Left lung (tissue), 14 donors: ENCODE measurements at regions of chr16 and their contacts with region 1.

Region 1: GRCh38 chr16:11407047-11407982 is 62.1 kb downstream of the RMI2 start:
- DNase-seq: peak in 3 of 4 donors; percentile 44 to 58 (median 54)
- ATAC-seq: peak; percentile 91
- H3K4me3 ChIP-seq: no peak overlapping the region
- H3K27ac ChIP-seq: no peak overlapping the region
- H3K4me1 ChIP-seq: peaks cover 0 to 5% of the 10 kb centered on the region in 2 donors
- H3K27me3 ChIP-seq: no peaks in the 10 kb centered on the region
- CTCF ChIP-seq: peak; percentile 61 to 62

Region 2: DNA sequence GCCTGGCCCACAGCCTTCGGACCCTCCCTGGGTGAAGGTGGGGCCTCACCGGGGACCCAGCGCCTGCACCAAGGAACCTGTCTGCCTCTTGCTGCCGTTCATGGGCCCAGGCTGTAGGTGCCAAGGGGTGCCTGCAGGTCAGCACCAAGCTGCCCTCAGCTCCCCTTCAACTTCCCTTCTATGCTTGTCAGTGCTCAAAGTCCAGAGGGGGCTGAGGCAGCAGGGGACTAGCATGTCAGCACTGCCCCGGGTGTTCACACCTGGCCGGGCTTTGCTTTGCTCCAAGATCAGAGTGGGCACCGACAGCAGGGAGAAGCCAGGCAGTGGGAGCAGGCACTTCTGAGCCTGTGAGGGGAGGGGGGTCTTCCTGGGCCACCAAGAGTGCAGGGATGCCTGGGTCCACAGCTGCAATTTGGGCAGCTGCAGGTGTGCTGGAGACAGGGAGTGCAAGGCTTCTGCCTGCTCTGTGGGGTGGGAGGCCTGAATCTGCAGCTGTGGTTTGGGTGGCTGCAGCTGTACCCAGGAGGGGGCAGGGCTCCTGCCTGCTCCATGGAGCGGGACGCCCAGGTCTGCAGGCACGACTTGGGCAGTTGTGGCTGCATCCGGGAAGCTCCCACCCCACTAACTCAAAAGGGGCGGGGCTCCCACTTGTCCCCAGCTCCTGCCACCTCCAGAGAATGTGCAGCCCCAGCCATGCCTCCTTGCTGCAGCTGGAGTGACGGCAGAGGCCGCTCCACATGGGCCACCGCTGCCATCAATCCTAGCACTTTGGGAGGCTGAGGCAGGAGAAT is 98.6 kb before region 1 on chr16:
- intact Hi-C with region 1: no loop called
- DNase-seq: no peak
- ATAC-seq: no peak
- H3K4me3 ChIP-seq: no peak overlapping the region
- H3K27ac ChIP-seq: peak overlapping the region; percentile 65 to 75
- H3K4me1 ChIP-seq: peaks cover 4 to 68% of the 10 kb centered on the region in 2 donors
- H3K27me3 ChIP-seq: no peaks in the 10 kb centered on the region
- CTCF ChIP-seq: no peak

Region 3: DNA sequence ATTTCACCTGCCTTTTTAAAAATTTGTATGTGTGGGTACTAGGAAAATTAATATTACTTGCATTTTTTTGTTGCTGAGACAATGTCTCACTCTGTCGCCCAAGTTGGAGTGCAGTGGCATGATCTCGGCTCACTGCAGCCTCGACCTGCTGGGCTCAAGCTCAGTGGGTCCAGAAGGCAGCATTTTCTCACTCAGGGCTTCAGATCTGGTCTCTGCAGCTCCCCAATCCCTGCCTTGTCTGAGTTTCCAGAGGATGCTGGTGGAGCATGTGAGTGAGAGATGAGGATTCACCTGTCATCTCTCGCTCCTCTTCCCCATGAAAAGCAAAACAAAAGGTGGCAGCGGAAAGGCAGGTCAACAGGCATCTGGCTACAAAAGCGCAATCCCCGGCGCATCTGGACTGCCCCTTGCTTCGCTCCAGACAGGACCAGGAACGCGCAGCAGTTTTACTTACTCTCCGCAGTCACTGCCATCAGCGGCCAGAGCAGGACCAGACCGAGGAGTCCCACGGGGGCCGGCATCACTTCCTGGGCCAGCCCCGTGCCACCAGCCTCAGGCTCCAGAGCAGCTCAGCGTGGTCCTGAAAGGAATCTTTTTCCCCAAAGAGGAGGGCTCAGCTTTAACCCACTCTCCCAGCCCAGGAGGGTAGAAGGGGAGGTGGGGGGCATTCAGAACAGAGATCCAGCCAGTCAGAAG is 119.5 kb after region 1 on chr16:
- intact Hi-C with region 1: loop called in 1 of 2 experiments (anchors 10 kb)
- DNase-seq: no peak
- ATAC-seq: no peak
- H3K4me3 ChIP-seq: no peak overlapping the region
- H3K27ac ChIP-seq: no peak overlapping the region
- H3K4me1 ChIP-seq: no peaks in the 10 kb centered on the region
- H3K27me3 ChIP-seq: peaks cover 0 to 17% of the 10 kb centered on the region in 2 donors
- CTCF ChIP-seq: no peak

Region 4: DNA sequence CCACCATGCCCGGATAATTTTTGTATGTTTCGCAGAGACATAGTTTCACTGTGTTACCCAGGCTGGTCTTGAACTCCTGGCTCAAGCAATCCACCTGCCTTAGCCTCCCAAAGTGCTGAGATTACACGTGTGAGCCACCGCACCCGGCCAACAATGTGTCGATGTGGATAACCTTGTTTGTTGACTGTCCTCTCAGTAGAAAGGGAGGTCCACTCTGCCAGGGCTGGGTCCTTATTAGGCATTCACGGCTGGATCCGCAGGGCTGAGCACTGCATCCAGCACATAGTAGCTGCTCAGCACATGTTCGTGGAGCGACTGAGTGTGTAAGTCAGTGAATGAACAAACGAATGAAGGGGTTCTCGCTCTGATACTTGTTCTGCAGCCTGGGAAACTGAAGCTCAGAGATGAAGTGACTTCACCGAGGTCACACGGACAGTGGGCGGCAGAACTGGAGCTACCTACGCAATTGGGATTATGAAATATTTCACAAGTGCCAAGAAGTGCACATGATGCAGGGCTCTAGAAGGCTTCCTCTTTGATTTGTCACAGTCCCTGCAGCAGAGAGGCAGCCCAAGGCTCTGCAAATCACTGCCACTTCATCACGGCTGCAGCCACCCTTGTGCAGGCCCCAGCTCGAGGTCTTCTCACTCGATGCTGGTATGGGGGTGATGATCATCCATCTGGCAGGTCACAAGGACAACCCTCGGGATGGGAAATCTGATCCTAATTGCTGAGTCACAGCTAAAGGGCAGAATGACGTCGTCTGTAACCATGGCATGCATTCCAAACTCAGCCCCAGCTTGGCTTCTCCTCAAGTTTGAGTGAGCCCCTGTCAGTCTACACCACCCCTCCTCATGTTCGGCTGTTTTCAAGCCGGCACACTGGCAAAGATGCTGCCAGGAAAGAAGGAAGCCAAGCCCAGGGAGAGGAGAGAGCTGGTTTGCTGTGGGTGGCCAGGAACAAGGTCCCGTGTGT is 232.9 kb after region 1 on chr16:
- intact Hi-C with region 1: loop called in 1 of 2 experiments (anchors 5 kb)
- DNase-seq: peak; percentile 86 to 97 (median 94)
- ATAC-seq: peak; percentile 84
- H3K4me3 ChIP-seq: no peak overlapping the region
- H3K27ac ChIP-seq: peak overlapping the region; percentile 92 to 94
- H3K4me1 ChIP-seq: peaks cover 10 to 38% of the 10 kb centered on the region in 2 donors
- H3K27me3 ChIP-seq: no peaks in the 10 kb centered on the region
- CTCF ChIP-seq: no peak

Region 5: DNA sequence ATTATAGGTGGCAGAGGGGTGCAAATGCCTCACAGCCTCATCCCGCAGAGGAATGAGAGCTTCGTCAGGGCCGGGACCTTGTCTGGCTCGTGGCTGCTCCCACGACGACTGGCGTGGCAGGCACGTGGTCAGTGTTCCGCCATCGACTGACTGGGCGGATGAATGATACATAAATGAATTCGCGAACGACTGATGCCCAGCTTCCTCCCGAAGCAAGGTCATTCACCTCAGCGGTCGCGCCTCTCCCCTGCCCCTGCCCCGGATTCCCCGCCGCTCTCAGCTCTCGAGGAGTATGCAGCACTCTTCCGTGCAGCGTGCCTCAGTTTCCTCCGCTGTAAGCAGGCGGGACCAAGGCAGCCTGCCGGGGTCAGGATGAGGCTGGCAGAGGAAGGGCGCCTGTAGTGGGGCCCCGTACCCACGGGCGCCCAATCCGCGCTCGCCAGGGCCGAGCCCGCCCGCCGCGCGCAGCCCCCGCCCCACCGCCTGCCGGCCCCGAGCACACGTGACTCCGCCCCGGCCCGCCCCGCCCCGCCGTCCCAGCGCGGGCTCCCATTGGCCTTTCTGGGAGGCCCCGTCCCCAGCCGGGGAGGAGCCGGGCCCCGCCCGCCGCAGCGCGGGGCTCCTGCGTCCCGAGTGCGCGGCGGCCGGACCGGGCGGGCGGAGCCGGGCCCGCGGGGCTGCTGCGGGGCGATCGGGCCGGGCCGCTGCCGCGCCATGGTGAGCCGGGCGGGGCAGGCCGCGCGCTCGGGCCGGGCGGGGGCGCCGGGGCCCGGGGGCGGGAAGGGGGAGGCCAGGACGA is 260.7 kb after region 1 on chr16 and contains the start of gene SNN:
- intact Hi-C with region 1: no loop called
- DNase-seq: peak; percentile 79 to 96 (median 90)
- ATAC-seq: peak; percentile 97
- H3K4me3 ChIP-seq: peak within 1 kb of the TSS; percentile 65 to 83
- H3K27ac ChIP-seq: peak within 1 kb of the TSS; percentile 42 to 77
- H3K4me1 ChIP-seq: peaks cover 26 to 51% of the 10 kb centered on the region in 2 donors
- H3K27me3 ChIP-seq: no peaks in the 10 kb centered on the region
- CTCF ChIP-seq: no peak
- polyA plus RNA-seq, gene SNN: 23.7 to 42.5 (median 33.9) TPM

Region 6: DNA sequence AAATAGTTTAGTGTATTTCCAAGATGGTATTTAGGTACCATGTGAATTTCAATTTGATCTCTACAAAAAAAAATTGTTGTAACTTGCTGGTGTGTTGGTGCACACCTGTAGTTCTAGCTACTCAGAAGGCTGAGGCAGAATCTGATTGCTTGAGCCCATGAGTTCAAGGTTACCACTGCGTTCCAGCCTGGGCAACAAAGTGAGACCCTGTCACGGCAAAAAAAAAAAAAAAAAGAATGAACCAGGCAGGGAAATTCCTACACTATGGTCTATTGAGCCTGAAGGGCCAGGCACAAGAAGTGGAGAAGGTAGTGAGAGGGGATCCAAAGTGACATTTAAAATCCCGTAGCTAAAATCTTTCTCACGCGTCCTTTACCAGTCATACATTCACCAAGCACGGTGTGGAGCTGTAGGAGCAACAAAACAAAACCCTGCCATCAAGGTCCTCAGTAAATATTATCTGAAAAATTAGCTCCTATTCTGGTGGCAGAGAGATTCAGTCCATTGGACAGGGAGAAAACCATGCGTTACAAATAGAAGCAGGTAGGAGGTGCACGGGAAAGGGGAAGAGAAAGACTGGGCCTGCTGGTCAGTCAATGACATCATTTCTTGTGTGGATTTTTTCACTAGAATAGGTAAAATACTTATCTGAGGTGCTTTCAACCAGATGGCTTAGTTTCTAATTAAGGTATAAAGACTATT is 308.1 kb after region 1 on chr16:
- intact Hi-C with region 1: loop called in 1 of 2 experiments (anchors 5 kb)
- DNase-seq: no peak
- ATAC-seq: no peak
- H3K4me3 ChIP-seq: no peak overlapping the region
- H3K27ac ChIP-seq: no peak overlapping the region
- H3K4me1 ChIP-seq: peaks cover 0 to 32% of the 10 kb centered on the region in 2 donors
- H3K27me3 ChIP-seq: no peaks in the 10 kb centered on the region
- CTCF ChIP-seq: no peak

Region 7: GRCh38 chr16:12067714-12068401 is 660.5 kb after region 1 on chr16:
- intact Hi-C with region 1: loop called in 1 of 2 experiments (anchors 10 kb)
- DNase-seq: peak in 3 of 4 donors; percentile 34 to 84 (median 70)
- ATAC-seq: peak; percentile 95
- H3K4me3 ChIP-seq: no peak overlapping the region
- H3K27ac ChIP-seq: no peak overlapping the region
- H3K4me1 ChIP-seq: peaks cover 3 to 16% of the 10 kb centered on the region in 2 donors
- H3K27me3 ChIP-seq: no peaks in the 10 kb centered on the region
- CTCF ChIP-seq: peak; percentile 90